ENCODE measurements at regions of chr9 and their contacts with region 1.

Region 1: DNA sequence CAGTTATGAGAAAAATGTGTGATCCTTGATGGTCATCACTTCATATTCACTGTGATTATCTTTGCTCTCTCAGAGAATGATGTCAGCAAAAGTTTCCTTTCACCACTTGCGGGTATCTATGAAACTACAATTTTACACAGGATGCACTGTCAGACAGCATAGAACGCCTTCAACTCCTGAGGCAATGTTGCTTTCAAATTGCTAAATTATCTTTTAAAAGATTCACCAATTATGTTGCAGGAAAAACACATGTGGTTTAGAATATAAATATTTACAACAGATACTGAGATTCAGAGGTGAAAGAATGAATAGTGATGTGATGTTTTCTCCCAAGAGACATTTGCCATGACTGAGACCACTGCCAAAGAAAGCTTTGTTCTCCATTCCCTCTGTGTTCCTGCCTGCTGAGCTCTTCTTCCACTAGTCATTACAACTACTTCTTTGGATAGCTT is 879.8 kb upstream of the DMAC1 start:
- DNase-seq: no peak
- ATAC-seq: no peak
- H3K4me3 ChIP-seq: no peak overlapping the region
- H3K27ac ChIP-seq: no peak overlapping the region
- H3K4me1 ChIP-seq: peaks cover 0 to 31% (median 12%) of the 10 kb centered on the region in 9 donors
- H3K27me3 ChIP-seq: no peaks in the 10 kb centered on the region
- CTCF ChIP-seq: no peak

Region 2: DNA sequence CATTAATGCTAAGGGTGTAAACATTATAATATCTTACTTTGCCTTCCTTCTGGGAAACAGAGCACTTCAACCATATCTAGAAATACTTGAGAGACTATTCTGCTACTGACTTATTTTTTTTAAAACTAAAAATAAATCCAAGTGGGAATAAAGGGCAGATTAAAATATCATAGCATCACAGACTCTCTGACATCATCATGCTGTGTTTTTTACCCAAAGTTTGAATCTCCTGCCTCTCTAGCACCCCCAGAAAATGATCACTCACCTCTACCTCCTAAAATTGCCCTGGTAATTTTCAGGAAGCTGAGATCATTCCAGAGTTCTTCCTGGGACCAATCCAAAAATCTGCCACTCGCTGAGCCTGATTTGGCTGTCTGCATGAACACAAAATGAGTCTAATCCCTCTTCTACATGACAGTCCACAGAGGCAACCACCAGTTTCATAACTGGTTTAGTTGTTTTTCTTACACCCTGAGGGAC is 66.0 kb before region 1 on chr9:
- intact Hi-C with region 1: loop called in 2 of 10 experiments (anchors 10 kb)
- DNase-seq: peak in 1 of 2 donors; percentile 32
- ATAC-seq: peak; percentile 47 to 89 (median 76)
- H3K4me3 ChIP-seq: no peak overlapping the region
- H3K27ac ChIP-seq: peak overlapping the region in 6 of 10 donors; percentile 7 to 64 (median 26)
- H3K4me1 ChIP-seq: peaks cover 0 to 21% (median 14%) of the 10 kb centered on the region in 9 donors
- H3K27me3 ChIP-seq: no peaks in the 10 kb centered on the region
- CTCF ChIP-seq: no peak

Region 3: GRCh38 chr9:8750639-8751051 is 71.2 kb after region 1 on chr9:
- intact Hi-C with region 1: no loop called
- DNase-seq: no peak
- ATAC-seq: peak in 3 of 8 donors; percentile 48 to 67 (median 64)
- H3K4me3 ChIP-seq: no peak overlapping the region
- H3K27ac ChIP-seq: no peak overlapping the region
- H3K4me1 ChIP-seq: peaks cover 0 to 11% (median 7%) of the 10 kb centered on the region in 9 donors
- H3K27me3 ChIP-seq: no peaks in the 10 kb centered on the region
- CTCF ChIP-seq: no peak